GM10248 (cell line): ENCODE measurements at regions of chr11 and their contacts with region 1.

Region 1: DNA sequence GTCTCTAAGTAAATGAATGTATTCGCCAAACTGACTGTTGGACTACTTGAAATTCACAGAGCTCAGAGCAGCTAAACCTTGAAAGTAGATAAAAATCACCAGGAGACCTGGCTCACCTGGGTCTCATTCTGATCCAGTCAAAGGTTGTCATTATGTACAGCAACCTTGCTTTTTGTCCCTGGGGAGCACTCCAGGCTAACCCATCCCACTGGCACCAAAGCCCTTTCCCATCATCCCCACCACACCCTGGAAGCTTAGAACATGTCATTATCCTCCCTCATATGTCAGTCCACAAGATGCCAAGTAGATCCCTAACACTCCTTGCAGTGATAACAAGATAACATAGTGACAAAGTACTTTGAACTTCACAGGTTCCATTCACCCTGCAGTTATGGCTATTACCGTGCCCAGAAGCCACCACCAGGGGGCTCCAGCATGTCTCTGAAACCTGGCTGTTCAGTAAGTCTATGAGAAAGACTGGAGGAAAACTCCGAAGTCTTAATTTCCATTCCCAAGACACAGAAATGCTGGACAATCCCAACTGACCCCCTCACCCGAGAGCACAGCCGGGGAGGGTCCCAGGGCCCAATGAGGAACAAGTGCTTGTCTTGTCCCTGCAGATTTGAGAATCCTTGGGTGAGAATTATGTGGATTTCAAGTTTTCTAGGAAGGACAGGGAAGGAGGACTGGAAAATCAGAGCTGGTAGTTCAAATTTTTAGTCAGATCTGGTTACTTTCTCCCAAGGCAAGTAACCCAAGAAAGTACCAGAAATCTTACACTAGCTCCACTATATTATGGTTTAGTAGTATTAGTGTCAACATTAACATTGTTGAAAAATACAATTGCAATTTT is 43.0 kb upstream of the USP47 start:
- DNase-seq: peak; percentile 64
- CTCF ChIP-seq: peak; percentile 87

Region 2: GRCh38 chr11:11667056-11667455 is 131.8 kb before region 1 on chr11:
- CTCF ChIA-PET with region 1: no interaction called
- POLR2A ChIA-PET with region 1: no interaction called
- DNase-seq: no peak
- CTCF ChIP-seq: no peak

Region 3: GRCh38 chr11:11842421-11843008 is 43.7 kb after region 1 on chr11:
- CTCF ChIA-PET with region 1: interaction called, 14 read pairs
- POLR2A ChIA-PET with region 1: no interaction called
- DNase-seq: peak; percentile 59
- CTCF ChIP-seq: no peak

Region 4: DNA sequence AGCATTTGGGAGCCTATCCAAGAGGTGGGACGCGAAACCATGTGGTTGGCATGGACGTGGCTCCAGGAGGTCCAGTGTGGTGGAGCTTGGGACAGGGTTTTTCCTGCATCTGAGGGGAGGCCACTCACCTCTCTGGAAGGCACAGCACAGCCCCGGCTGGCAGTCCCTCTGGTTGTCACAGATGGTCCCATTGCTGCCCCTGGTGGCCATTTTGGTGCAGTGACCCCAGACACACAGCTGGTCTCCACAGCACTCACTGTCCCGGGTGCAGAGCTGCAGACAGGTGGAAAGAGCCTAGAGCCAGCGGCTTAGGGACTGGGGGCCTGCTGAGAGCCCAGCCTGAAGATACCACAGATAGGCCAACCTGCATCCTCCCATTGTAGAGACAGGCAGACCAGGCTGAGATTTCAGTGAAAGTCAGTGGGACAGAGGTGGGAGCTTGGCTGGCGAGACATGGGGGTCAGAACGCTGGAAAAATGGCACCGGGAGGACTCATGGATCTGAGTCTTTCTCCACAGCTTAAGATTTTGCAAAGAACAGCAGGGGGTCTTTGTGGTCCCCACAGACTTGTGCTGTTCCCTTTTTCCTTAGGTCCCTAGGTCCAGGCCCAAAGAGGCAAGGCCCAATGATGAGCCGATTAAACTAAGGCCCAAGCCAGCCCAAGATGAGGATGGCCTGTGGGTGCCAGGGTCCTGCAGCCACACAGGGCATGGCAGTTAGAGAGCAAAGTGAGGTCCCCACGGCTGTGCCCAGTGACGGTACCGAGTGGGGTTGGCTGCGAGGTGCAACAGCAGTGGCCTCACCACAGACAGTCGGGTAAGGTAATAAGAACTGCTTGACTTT is 168.2 kb after region 1 on chr11:
- CTCF ChIA-PET with region 1: interaction called, 18 read pairs
- POLR2A ChIA-PET with region 1: no interaction called
- DNase-seq: peak; percentile 87
- CTCF ChIP-seq: peak; percentile 84

Region 5: DNA sequence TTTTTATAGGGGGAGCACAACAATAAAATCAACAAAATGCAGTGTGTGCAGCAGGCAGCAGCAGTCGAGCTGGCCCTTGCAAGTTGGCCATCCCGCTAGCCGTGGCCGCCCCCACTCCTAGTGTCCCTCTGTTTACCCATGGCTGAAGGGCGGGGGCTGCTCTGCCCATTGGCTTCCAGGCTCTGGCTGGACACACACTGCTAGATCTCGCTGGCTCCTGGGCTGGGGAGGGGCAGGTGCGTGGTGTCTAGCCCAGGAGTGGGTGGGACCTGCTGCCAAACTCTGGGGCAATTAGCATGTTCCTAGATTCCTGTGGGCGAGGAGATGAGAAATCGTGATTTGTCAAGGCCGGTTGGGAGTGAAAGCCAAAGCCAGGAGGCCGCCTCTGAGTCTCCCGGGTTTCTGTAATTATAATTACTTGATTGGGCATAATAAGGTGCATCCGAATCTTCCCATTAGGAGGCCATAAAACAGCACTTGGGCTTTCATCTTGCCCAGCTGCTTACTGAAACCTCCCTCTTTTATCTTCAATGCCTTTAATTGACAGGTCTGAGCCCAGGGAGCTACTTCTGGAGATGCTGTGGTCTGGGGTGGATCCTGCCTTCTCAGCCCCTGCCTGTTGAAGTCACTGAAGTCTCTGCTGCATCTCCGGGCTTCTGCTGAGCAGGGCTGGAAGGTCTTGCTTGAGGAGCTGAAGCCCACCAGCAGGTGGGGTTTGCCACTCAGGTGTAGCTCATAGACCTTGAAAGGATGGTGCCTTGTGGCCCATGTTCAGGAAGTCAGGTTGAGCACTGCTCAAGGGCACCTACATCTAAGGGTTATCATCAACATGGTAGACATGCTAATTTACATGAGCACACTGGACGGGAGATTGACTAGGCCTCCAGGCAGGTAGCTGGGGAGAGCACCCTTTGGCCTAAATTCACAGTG is 254.1 kb after region 1 on chr11:
- CTCF ChIA-PET with region 1: interaction called, 12 read pairs
- POLR2A ChIA-PET with region 1: no interaction called
- DNase-seq: no peak
- CTCF ChIP-seq: no peak